Astrocyte of the cerebellum (primary cell): ENCODE measurements at regions of chr18 and their contacts with region 1.

Region 1: DNA sequence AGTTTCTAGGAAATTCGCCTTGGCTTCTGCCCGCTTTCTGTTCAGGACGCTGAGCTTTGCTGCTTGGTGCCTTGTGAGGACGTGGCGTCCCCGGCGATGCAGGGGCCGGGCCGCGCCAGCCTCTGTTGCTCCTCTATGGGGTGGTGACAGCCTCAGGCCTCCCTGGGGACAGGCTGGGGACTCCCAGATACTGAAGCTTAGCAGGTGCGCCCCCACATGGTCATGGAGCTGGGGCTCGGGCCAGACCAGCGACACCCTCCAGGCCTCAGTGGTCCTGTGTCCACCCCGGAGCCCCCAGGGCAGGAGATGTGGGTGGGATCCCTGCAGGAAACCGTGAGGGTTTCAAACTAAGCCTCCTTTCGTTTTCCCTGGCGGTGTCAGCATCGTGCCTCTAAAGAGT is 29.2 kb downstream of the KCNG2 start:
- DNase-seq: no peak
- H3K4me3 ChIP-seq: no peak overlapping the region
- CTCF ChIP-seq: no peak

Region 2: GRCh38 chr18:79784965-79785770 is 41.8 kb before region 1 on chr18:
- in situ Hi-C with region 1: loop called (anchors 5 kb)
- DNase-seq: no peak
- H3K4me3 ChIP-seq: no peak overlapping the region
- CTCF ChIP-seq: no peak

Region 3: DNA sequence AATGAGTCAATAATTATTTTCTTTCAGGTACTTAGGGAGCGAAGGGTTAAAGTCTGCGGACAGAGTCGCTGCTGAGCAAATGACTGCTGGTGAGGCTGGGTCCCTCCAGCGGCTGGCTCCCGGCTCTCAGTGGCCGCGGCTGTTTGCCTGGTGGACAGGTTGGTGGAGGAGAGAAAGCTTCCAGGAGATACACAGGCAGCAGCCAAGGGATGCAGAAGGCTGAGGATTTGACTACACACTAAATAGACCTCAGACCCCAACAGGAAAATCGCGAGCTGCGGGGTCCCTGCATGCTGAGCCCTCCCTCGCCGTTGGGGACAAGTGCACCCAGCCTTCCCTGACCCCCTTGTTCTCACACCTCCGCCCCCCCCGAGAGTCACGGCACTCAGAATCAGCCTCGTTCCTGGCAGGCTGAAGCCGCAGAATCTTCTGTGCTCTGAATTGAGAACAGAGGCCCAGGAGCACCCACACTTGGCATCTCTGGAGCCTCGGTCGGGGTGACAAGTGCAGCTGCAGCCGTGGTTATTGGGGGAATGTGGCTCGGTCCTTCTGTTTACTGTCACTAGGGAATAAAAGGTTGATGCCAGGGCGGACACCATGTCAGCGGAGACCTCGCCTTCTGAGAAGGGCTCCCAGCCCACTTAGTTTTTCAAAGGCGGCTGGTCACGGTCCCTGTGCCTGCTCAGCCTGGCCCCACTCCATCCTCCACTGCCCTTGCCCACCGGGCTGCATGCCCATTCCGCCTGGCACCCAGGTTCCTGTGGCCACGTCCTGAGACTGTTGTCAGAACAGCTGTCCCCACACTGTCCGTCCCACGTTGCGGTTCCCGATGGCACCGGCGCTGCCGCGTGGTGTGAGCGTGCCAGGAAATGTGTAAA is 50.5 kb after region 1 on chr18:
- in situ Hi-C with region 1: loop called (anchors 5 kb)
- DNase-seq: no peak
- H3K4me3 ChIP-seq: no peak overlapping the region
- CTCF ChIP-seq: no peak